Testis (tissue), 5 donors: ENCODE measurements at regions of chr3 and their contacts with region 1.

Region 1: GRCh38 chr3:40317061-40317855 is 7.8 kb downstream of the EIF1B start:
- DNase-seq: peak; percentile 68
- H3K4me3 ChIP-seq: no peak overlapping the region
- H3K27ac ChIP-seq: no peak overlapping the region
- H3K4me1 ChIP-seq: peaks cover 1% of the 10 kb centered on the region
- H3K27me3 ChIP-seq: no peaks in the 10 kb centered on the region
- CTCF ChIP-seq: peak; percentile 77 to 88 (median 79)
- POLR2A ChIP-seq: no peak

Region 2: GRCh38 chr3:40191850-40192448 is 125.3 kb before region 1 on chr3:
- intact Hi-C with region 1: loop called (anchors 5 kb)
- DNase-seq: peak; percentile 79
- H3K4me3 ChIP-seq: no peak overlapping the region
- H3K27ac ChIP-seq: no peak overlapping the region
- H3K4me1 ChIP-seq: no peaks in the 10 kb centered on the region
- H3K27me3 ChIP-seq: no peaks in the 10 kb centered on the region
- CTCF ChIP-seq: peak; percentile 85 to 93 (median 86)
- POLR2A ChIP-seq: no peak

Region 3: DNA sequence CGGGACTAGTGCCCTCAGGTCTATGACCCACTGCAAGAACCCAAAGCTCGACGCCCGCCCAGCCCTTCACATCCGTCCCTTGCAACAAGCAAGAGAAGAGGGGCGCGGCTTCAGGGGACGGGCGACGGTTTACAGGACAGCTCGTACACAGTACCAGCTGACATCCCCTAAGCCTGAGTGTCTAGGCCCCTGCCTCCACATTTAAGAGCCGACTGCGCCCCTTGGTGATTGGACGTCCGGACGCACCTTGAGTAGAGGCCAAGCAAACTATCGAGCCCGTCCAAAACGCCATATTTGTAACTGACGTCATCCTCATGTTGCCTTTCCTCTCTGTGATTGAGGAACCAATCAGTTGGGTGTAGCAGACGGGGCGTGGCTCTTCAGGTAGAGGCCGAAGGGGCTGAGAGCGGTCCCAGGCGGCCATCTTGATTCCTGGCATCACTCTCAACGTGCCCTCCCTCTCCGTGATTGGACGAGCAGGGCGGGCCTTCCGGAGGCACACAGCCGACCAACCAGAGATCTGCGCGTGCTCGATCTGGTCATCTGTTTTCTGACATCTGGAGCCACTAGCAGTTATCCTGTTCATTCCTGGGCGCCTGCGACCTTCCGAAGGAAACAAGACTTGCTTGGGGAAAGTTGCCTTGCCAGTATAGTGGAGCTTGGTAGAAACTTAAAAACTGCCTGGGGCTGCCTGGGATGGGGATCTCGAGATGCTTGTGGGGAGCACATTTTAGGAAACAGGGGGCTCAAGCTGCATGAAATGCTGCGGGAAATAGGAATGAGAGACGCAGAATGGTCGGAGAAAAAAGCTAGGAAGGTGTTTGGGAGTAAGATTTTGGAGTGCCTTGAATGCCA is 135.8 kb after region 1 on chr3:
- intact Hi-C with region 1: loop called (anchors 10 kb)
- DNase-seq: peak; percentile 100
- H3K4me3 ChIP-seq: peak overlapping the region; percentile 61 to 77
- H3K27ac ChIP-seq: peak overlapping the region; percentile 90 to 92
- H3K4me1 ChIP-seq: peaks cover 16% of the 10 kb centered on the region
- H3K27me3 ChIP-seq: no peaks in the 10 kb centered on the region
- CTCF ChIP-seq: peak in 1 of 3 experiments; percentile 2
- POLR2A ChIP-seq: peak; percentile 31

Region 4: GRCh38 chr3:40494698-40495097 is 177.4 kb after region 1 on chr3:
- intact Hi-C with region 1: no loop called
- DNase-seq: no peak
- H3K4me3 ChIP-seq: no peak overlapping the region
- H3K27ac ChIP-seq: no peak overlapping the region
- H3K4me1 ChIP-seq: no peaks in the 10 kb centered on the region
- H3K27me3 ChIP-seq: no peaks in the 10 kb centered on the region
- CTCF ChIP-seq: no peak
- POLR2A ChIP-seq: no peak

Region 5: DNA sequence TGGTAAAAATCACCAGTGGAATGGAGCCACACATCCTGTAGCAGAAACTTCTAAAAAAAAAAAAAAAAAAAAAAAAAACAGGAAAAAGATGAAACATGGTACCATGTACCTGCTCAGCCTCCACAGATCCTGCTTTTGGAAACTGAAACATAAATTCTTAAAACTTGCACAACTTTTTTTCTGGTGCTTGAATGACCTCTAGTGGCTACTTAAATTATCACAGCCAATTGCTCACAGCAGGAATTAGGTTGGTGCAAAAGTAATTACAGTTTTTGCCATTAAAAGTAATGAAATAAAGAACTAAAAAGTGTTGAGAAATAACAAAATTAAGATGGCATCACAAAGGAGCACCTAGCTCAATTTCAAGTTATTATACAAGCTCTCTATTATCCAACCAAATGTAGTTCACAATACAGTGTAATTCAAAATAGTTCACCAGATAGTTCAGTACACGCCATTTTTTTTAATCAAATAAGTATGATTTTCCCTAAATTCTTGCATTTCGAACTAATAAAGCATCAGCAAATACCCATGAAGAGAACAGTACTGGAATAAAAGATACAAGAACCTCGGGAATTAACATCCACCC is 1564.1 kb after region 1 on chr3:
- intact Hi-C with region 1: loop called (anchors 10 kb)
- DNase-seq: no peak
- H3K4me3 ChIP-seq: no peak overlapping the region
- H3K27ac ChIP-seq: no peak overlapping the region
- H3K4me1 ChIP-seq: no peaks in the 10 kb centered on the region
- H3K27me3 ChIP-seq: no peaks in the 10 kb centered on the region
- CTCF ChIP-seq: peak; percentile 69 to 77 (median 69)
- POLR2A ChIP-seq: no peak

Region 6: GRCh38 chr3:42036483-42036823 is 1719.2 kb after region 1 on chr3:
- intact Hi-C with region 1: no loop called
- DNase-seq: peak; percentile 60
- H3K4me3 ChIP-seq: no peak overlapping the region
- H3K27ac ChIP-seq: peak overlapping the region; percentile 1 to 33
- H3K4me1 ChIP-seq: peaks cover 43% of the 10 kb centered on the region
- H3K27me3 ChIP-seq: no peaks in the 10 kb centered on the region
- CTCF ChIP-seq: no peak
- POLR2A ChIP-seq: no peak